ENCODE measurements at regions of chr9 and their contacts with region 1.

Region 1: DNA sequence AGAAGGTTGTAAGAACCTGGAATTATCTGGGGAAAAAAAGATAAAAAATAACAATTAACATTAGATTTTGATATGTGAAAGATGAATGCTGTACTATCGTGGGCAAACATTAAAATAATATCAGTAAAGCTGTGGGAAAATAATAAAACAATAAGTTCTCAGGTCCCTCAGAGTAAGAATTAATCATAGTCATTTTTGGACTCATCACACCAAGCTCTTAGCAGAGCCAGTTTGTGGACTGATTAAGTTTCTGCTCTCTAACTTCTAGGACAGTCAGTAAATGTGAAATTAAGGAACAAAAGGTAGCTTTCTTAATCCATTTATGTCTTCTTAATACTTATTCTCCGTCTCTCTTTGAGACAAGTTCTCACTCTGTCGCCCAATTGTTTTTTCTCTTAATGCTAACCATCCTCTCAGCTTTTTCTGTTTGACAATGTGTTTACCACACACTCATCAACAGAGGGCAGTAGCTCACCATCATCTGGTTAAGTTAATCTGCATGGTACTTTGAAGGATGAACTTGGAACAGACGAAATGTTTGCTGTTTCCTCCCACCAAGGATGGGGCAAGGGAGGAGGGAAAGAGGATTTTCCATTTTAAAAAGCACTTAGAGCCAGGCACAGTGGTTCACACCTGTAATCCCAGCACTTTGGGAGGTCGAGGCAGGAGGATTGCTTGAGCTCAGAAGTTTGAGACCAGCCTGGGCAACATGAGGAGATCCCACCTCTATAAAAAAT is 5.3 kb upstream of the ACO1 start:
- DNase-seq: no peak
- ATAC-seq: peak; percentile 89 to 93
- H3K4me3 ChIP-seq: no peak overlapping the region
- H3K27ac ChIP-seq: no peak overlapping the region
- H3K4me1 ChIP-seq: peaks cover 8% of the 10 kb centered on the region
- H3K27me3 ChIP-seq: no peaks in the 10 kb centered on the region
- CTCF ChIP-seq: peak; percentile 74

Region 2: DNA sequence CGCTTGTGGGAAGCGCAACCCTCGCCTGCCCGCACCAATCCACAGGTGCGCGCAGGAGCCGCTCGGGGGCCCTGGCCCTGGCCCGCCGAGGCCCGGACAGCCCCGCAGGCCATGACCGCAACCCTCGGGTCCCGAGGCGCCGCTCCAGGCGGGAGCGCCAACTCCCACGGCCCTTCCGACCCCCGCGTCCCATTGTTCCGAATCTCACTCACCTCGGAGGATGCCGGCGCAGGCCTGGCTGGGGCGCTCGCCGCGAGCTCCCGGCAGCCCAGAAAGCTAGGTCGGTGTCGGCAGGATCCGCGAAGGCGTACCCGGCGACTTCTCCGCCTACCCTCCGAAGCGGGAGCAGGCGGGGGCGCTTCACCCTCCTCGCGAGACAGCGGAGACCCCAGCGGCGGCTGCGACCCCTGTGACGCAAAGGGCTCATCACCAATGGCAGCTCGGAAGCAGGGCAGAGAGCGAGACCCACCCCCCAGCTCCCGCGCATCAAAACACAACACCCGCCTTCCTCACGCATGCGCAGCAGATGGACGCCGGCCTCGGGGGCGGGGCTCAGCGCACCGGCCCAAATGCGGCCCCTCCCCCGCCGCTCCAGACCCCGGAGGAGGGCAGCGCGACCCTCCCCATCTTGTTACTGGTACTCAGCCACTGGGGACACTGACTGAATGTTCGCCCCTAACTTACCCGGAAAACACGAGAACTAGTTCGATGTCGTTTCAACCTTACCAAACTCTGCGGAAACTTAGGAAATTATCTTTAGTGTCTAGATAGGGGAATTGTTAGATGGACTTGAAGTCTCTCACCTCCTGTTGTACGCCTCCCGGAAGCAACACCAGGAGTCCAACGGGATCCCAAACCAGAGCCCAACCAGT is 171.6 kb after region 1 on chr9:
- intact Hi-C with region 1: no loop called
- DNase-seq: peak; percentile 92
- ATAC-seq: peak; percentile 91 to 93
- H3K4me3 ChIP-seq: peak overlapping the region; percentile 79
- H3K27ac ChIP-seq: peak overlapping the region; percentile 89
- H3K4me1 ChIP-seq: peaks cover 22% of the 10 kb centered on the region
- H3K27me3 ChIP-seq: no peaks in the 10 kb centered on the region
- CTCF ChIP-seq: no peak

Region 3: GRCh38 chr9:32579706-32580331 is 200.7 kb after region 1 on chr9:
- intact Hi-C with region 1: loop called (anchors 2 kb)
- DNase-seq: peak; percentile 66
- ATAC-seq: peak in 1 of 2 donors; percentile 57
- H3K4me3 ChIP-seq: no peak overlapping the region
- H3K27ac ChIP-seq: no peak overlapping the region
- H3K4me1 ChIP-seq: no peaks in the 10 kb centered on the region
- H3K27me3 ChIP-seq: peaks cover 2% of the 10 kb centered on the region
- CTCF ChIP-seq: peak; percentile 91

Measured in lower lobe of right lung (tissue), 2 donors.